CD4-positive, alpha-beta T cell (primary cell): ENCODE measurements at regions of chr7 and their contacts with region 1.

Region 1: DNA sequence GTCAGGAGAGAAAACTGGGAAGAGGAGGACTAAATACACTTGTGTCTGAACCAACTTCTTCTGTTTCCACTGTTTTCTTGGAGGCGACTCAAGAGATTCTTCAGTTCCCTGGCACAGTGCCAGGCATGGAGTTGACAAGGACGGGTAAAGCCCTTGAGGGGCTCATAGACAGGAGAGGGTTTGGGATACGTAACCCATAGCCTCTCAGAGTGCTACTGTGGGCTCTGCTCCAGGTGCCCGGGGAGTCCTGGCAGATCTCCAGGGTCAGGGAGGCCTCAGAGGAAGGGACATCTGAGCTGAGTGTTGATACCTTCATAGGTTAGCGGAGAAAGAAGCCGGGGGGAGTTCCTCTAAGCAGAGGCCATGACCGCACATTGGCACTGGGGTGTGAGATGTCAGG is 42.0 kb downstream of the GALNT17 start:
- DNase-seq: no peak
- ATAC-seq: no peak
- H3K4me3 ChIP-seq: no peak overlapping the region
- H3K4me3 Mint-ChIP-seq: no peak overlapping the region
- H3K27ac ChIP-seq: no peak overlapping the region
- H3K27ac Mint-ChIP-seq: no peak overlapping the region
- H3K4me1 ChIP-seq: no peaks in the 10 kb centered on the region
- H3K4me1 Mint-ChIP-seq: no peaks in the 10 kb centered on the region
- H3K27me3 ChIP-seq: no peaks in the 10 kb centered on the region
- H3K27me3 Mint-ChIP-seq: no peaks in the 10 kb centered on the region
- CTCF ChIP-seq: no peak

Region 2: GRCh38 chr7:71237945-71238344 is 64.0 kb after region 1 on chr7:
- CTCF ChIA-PET with region 1: no interaction called
- POLR2A ChIA-PET with region 1: no interaction called
- intact Hi-C with region 1: loop called in 1 of 2 experiments (anchors 10 kb)
- DNase-seq: no peak
- ATAC-seq: no peak
- H3K4me3 ChIP-seq: no peak overlapping the region
- H3K4me3 Mint-ChIP-seq: no peak overlapping the region
- H3K27ac ChIP-seq: no peak overlapping the region
- H3K27ac Mint-ChIP-seq: no peak overlapping the region
- H3K4me1 ChIP-seq: no peaks in the 10 kb centered on the region
- H3K4me1 Mint-ChIP-seq: no peaks in the 10 kb centered on the region
- H3K27me3 ChIP-seq: no peaks in the 10 kb centered on the region
- H3K27me3 Mint-ChIP-seq: no peaks in the 10 kb centered on the region
- CTCF ChIP-seq: no peak